ENCODE measurements at regions of chr9 and their contacts with region 1.

Region 1: DNA sequence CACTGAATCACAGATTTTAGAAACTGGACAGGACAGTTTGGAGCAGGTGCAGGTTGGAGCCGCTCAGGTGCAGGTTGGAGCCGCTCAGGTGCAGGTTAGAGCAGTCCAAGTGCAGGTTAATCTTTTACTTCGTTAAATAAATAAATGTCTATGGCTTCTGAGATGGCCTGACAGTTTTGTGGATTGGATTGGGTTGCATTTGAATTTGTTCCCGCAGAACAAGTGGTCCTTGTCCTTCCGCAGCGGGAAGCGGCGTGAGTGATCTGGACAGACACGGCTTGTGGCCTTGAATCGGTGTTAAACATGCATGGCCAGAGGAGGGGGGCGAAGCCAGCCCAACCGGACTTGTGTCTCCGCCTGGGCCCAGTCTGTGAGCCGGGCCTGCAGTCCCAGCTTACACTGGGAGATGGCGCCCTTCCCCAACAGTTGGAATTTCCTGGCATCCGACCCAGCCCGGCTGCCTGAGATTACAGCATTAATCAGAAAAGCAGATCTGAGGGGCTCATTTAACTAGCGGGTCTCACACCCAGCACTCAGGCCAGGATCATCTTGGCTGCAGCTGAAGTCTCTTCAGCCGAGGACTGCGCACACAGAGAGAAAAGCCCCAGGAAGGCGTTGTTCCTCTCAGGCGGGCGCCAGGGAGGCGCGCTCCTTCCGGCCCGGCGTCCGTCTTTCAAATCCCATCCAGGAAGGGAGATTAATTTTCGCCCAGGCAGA is 1.5 kb upstream of the OLFM1 start:
- H3K4me3 Mint-ChIP-seq: peak overlapping the region; percentile 53
- H3K27ac Mint-ChIP-seq: no peak overlapping the region
- H3K4me1 Mint-ChIP-seq: peaks cover 6% of the 10 kb centered on the region
- H3K27me3 Mint-ChIP-seq: peaks cover 69% of the 10 kb centered on the region

Region 2: GRCh38 chr9:135037521-135038250 is 48.3 kb before region 1 on chr9:
- intact Hi-C with region 1: no loop called
- H3K4me3 Mint-ChIP-seq: no peak overlapping the region
- H3K27ac Mint-ChIP-seq: no peak overlapping the region
- H3K4me1 Mint-ChIP-seq: no peaks in the 10 kb centered on the region
- H3K27me3 Mint-ChIP-seq: peaks cover 32% of the 10 kb centered on the region

Region 3: GRCh38 chr9:135152605-135153334 is 66.8 kb after region 1 on chr9:
- intact Hi-C with region 1: no loop called
- H3K4me3 Mint-ChIP-seq: no peak overlapping the region
- H3K27ac Mint-ChIP-seq: no peak overlapping the region
- H3K4me1 Mint-ChIP-seq: no peaks in the 10 kb centered on the region
- H3K27me3 Mint-ChIP-seq: peaks cover 5% of the 10 kb centered on the region

Region 4: DNA sequence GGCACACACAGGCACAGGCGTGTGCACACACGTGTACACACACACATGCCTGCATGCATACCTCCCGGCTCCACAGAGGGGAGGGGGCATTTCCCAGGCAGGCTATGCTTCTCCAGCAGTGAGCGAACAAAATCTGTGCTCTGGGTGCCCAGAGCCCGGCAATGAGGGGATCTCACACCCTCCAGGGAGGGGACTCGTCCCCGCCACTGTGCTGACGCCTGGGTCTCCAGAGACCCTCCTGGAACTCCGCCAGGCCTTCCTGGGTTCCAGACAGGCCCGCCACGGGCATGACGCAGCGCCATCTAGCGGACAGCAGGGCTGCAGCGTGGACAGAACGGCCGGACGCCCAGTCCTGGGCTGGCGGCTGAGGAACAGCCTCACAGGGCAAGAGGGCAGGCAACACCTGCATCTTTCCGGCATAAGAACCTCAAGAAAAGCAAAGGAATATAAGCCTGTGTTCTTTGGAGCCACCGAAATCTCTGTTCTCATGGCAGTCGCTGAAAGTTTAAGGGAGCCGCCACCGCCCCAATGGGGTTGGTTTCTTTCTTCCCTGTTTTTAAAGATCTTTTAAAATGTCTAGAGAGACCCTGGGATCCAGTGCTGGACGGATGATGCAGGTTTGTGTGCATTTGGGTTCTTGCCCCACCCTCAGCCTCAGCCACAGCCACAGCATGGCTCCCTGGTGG is 258.0 kb after region 1 on chr9:
- intact Hi-C with region 1: loop called (anchors 5 kb)
- H3K4me3 Mint-ChIP-seq: no peak overlapping the region
- H3K27ac Mint-ChIP-seq: no peak overlapping the region
- H3K4me1 Mint-ChIP-seq: no peaks in the 10 kb centered on the region
- H3K27me3 Mint-ChIP-seq: peaks cover 15% of the 10 kb centered on the region

Measured in dendritic cell treated with granulocyte-macrophage colony-stimulating factor and Interleukin-4, amounts not matched to agents 40 ng/mL and 50 ng/mL, for 4 days (primary cell).